AG04449 (cell line): ENCODE measurements at regions of chr17 and their contacts with region 1.

Region 1: GRCh38 chr17:7687908-7688807 is at the start of gene WRAP53:
- DNase-seq: peak; percentile 94
- H3K4me3 ChIP-seq: peak within 1 kb of the TSS; percentile 99
- CTCF ChIP-seq: peak; percentile 94

Region 2: GRCh38 chr17:7045909-7046724 is 642.0 kb before region 1 on chr17:
- CTCF ChIA-PET with region 1: interaction called, 11 read pairs
- POLR2A ChIA-PET with region 1: no interaction called
- DNase-seq: peak; percentile 44
- H3K4me3 ChIP-seq: no peak overlapping the region
- CTCF ChIP-seq: peak; percentile 51

Region 3: GRCh38 chr17:7548585-7549400 is 139.4 kb before region 1 on chr17 and contains the start of gene TNFSF12:
- CTCF ChIA-PET with region 1: no interaction called
- POLR2A ChIA-PET with region 1: no interaction called
- DNase-seq: no peak
- H3K4me3 ChIP-seq: peak within 1 kb of the TSS; percentile 70
- CTCF ChIP-seq: peak; percentile 44

Region 4: GRCh38 chr17:7572588-7573323 is 115.4 kb before region 1 on chr17:
- CTCF ChIA-PET with region 1: interaction called, 19 read pairs
- POLR2A ChIA-PET with region 1: interaction called, 15 read pairs
- DNase-seq: no peak
- H3K4me3 ChIP-seq: peak overlapping the region; percentile 100
- CTCF ChIP-seq: no peak

Region 5: GRCh38 chr17:7589204-7589868 is 98.8 kb before region 1 on chr17:
- CTCF ChIA-PET with region 1: interaction called, 57 read pairs
- POLR2A ChIA-PET with region 1: interaction called, 19 read pairs
- DNase-seq: no peak
- H3K4me3 ChIP-seq: peak overlapping the region; percentile 6; the same call in 1 of the 2 replicates
- CTCF ChIP-seq: peak; percentile 89

Region 6: DNA sequence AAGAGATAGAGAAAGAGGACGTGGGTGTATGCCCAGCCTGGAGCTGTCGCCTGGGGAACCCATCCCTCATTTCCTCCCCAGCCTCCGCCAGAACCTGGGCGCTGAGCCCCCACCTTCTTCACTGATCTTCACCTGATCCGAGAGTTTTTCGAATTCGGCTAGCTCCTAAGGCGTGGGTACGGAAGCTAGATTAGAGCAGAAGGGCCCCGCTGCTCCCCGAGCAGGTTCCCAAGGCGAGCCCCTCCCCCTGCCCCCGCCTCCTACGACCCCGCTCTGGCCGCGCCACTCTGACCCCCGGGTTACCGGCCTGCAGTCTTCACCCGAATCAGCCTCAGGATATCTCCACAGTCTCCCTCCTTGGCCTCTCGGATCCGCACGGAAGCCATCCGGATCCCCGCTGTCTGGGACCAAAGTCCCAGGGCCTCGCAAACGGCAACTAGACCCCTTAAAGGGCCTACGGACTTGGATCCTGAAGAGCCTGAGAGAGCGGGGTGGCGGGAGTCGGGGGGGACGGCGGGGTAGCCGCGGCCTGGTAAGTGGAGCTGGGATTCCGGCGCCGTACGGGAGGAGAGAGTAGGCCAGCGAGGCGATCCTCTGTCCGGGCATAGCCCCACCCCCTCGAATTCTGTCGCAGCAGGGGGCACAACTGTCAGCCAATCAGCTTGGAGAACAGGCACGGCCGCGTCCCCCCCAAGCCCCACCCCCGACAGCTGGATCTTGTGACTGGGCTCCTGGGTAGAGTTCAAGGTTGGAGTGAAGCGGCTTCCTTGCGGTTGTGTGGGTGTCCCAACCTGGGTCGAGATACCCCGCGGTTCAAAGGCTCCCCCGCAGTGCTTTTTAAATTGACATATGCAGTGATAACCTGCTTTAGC is 60.7 kb before region 1 on chr17 and contains the start of gene SAT2:
- CTCF ChIA-PET with region 1: interaction called, 201 read pairs
- POLR2A ChIA-PET with region 1: interaction called, 15 read pairs
- DNase-seq: peak; percentile 52
- H3K4me3 ChIP-seq: peak within 1 kb of the TSS; percentile 65
- CTCF ChIP-seq: no peak

Region 7: GRCh38 chr17:7667656-7668406 is 20.3 kb before region 1 on chr17:
- CTCF ChIA-PET with region 1: interaction called, 22 read pairs
- POLR2A ChIA-PET with region 1: interaction called, 4 read pairs
- DNase-seq: no peak
- H3K4me3 ChIP-seq: no peak overlapping the region
- CTCF ChIP-seq: no peak

Region 8: DNA sequence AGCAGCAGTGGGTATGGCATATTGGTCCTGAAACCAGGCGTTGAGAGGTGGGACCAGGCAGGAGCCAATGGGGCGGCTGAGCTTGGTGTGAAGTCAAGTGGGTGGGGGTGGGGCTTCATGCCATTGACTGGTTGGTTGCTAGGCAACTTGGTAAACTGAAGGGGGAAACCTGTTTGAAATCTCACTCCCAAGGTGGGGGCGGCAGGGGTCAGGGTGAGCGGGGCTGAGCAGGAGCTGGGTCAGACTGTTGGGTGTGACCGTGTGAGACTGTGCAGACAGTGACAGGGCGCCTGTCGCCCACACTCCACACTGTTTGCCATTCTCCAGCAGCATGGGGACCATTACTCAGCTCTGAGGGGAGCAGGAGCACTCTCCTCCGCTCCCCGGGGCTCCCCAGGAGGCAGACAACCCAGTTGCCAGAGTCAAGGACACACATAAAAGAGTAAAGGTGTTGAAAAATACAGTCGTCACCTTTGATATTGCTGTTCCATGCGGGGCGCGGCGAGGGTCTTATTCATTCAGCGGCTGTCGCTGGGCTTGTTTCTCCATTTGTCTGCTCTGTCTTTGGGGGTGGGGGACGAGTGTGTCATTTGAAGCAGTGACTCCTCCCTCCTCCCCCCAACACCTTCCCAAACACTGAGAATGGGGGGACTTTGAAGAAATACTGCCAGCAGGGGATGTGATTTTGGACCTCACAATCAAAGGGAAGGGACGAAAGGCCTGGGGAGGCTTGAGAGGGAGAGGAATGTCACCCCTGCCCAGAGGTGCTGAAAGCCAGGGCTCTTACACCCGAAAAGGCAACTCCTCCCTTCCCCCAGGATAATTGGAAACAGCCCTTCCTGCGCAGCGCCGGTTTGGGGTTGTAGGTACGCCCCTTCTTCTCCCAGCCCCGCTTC is 15.7 kb after region 1 on chr17:
- CTCF ChIA-PET with region 1: interaction called, 45 read pairs
- POLR2A ChIA-PET with region 1: interaction called, 11 read pairs
- DNase-seq: no peak
- H3K4me3 ChIP-seq: peak overlapping the region; percentile 58
- CTCF ChIP-seq: no peak